Activated CD8-positive, alpha-beta T cell treated with anti-CD3 and anti-CD28 coated beads for 36 hours (primary cell): ENCODE measurements at regions of chr10 and their contacts with region 1.

Region 1: GRCh38 chr10:62183442-62183841 is 85.2 kb downstream of the RTKN2 start:
- DNase-seq: peak; percentile 63
- ATAC-seq: peak; percentile 64
- H3K4me3 Mint-ChIP-seq: peak overlapping the region; percentile 17
- H3K27ac Mint-ChIP-seq: peak overlapping the region; percentile 99
- H3K4me1 Mint-ChIP-seq: peaks cover 82% of the 10 kb centered on the region
- H3K27me3 Mint-ChIP-seq: no peaks in the 10 kb centered on the region
- CTCF ChIP-seq: no peak

Region 2: GRCh38 chr10:61943674-61944410 is 239.6 kb before region 1 on chr10:
- CTCF ChIA-PET with region 1: interaction called, 4 read pairs
- POLR2A ChIA-PET with region 1: interaction called, 3 read pairs
- intact Hi-C with region 1: loop called (anchors 5 kb)
- DNase-seq: peak; percentile 58
- ATAC-seq: peak; percentile 77
- H3K4me3 Mint-ChIP-seq: peak overlapping the region; percentile 70
- H3K27ac Mint-ChIP-seq: peak overlapping the region; percentile 98
- H3K4me1 Mint-ChIP-seq: peaks cover 64% of the 10 kb centered on the region
- H3K27me3 Mint-ChIP-seq: no peaks in the 10 kb centered on the region
- CTCF ChIP-seq: no peak

Region 3: GRCh38 chr10:62082729-62083411 is 100.6 kb before region 1 on chr10:
- CTCF ChIA-PET with region 1: no interaction called
- POLR2A ChIA-PET with region 1: interaction called, 10 read pairs
- intact Hi-C with region 1: no loop called
- DNase-seq: peak; percentile 75
- ATAC-seq: peak; percentile 81
- H3K4me3 Mint-ChIP-seq: peak overlapping the region; percentile 58
- H3K27ac Mint-ChIP-seq: peak overlapping the region; percentile 92
- H3K4me1 Mint-ChIP-seq: peaks cover 64% of the 10 kb centered on the region
- H3K27me3 Mint-ChIP-seq: no peaks in the 10 kb centered on the region
- CTCF ChIP-seq: no peak

Region 4: DNA sequence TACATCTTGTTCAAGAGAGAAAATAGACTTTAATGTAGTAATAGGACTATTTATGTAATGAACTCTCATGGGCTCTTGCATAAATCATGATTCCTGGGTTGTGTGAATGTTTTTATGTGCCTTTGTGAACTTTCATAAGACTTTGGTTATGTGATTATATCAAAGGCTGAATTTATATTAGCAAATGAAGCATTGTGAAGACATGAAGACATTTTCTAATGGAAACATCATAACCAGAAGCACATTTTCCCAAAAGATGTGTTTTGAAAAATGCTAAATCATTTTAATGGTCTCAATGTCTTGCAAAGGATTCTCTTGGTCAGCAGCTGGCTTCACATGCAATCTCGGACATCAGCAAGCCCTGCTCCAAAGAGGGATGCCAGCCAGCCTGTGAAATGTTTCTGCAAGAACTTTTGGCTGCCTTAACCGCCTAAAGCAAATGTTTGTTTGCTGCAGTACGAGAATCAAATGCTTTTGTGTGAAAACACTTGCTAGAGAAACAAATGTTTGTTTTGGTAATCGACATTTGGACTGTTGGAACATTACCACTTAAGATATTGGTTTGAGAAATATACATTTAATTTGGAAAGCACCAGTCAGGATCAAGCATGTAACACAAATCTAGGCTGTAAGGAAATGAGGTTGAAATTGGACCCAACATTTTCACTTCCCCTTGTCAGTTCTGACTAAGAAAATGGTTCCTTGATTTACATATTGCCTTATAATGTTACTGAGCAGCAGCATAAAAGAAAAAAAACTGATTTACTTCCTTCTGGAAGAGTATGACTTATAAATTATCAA is 16.9 kb before region 1 on chr10:
- CTCF ChIA-PET with region 1: no interaction called
- POLR2A ChIA-PET with region 1: no interaction called
- intact Hi-C with region 1: no loop called
- DNase-seq: no peak
- ATAC-seq: no peak
- H3K4me3 Mint-ChIP-seq: no peak overlapping the region
- H3K27ac Mint-ChIP-seq: no peak overlapping the region
- H3K4me1 Mint-ChIP-seq: peaks cover 9% of the 10 kb centered on the region
- H3K27me3 Mint-ChIP-seq: no peaks in the 10 kb centered on the region
- CTCF ChIP-seq: no peak